HepG2 (cell line): ENCODE measurements at regions of chr5 and their contacts with region 1.

Region 1: DNA sequence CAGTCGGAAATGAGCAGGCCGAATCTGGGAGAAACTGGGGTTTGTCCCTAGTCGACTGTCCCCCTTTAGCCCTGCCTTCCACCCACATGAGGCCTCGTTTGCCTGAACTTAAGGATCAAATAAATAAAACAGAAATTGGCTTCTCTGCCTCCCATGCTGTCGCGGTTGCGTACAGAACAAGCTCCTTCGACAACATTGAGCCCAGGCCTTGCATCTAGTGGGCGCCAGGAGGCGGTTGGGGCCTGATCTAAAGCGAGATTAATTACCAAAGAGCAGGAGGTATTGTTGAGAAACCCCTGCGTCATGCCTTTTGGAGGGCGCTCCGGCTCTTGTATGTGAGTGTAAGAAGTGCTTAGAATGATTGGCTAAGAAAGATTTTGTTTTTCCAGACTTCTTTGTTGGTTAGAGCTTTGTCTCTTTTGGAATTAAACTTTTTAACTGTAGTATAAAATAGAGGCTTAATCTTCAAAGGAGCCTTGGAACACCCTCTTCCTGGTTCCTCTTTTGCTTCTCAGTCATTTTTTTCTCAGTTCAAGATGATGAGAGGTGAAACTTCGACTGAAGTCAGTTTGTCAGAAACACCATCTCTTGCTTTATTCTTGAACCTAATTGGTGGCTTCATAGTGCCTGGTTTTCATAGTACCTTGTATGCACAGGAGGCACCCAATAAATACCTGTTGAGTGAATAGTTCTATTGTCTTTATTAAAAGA is 827 bp downstream of the ATP6V0E1 start:
- DNase-seq: peak; percentile 80
- ATAC-seq: peak; percentile 84
- H3K4me3 ChIP-seq: peak overlapping the region; percentile 72 to 96 (median 96)
- H3K27ac ChIP-seq: peak overlapping the region; percentile 72
- H3K4me1 ChIP-seq: peaks cover 26% of the 10 kb centered on the region
- H3K27me3 ChIP-seq: no peaks in the 10 kb centered on the region
- CTCF ChIP-seq: peak; percentile 63
- EP300 ChIP-seq: no peak
- POLR2A ChIP-seq: no peak
- RAD21 ChIP-seq: peak; percentile 31

Region 2: DNA sequence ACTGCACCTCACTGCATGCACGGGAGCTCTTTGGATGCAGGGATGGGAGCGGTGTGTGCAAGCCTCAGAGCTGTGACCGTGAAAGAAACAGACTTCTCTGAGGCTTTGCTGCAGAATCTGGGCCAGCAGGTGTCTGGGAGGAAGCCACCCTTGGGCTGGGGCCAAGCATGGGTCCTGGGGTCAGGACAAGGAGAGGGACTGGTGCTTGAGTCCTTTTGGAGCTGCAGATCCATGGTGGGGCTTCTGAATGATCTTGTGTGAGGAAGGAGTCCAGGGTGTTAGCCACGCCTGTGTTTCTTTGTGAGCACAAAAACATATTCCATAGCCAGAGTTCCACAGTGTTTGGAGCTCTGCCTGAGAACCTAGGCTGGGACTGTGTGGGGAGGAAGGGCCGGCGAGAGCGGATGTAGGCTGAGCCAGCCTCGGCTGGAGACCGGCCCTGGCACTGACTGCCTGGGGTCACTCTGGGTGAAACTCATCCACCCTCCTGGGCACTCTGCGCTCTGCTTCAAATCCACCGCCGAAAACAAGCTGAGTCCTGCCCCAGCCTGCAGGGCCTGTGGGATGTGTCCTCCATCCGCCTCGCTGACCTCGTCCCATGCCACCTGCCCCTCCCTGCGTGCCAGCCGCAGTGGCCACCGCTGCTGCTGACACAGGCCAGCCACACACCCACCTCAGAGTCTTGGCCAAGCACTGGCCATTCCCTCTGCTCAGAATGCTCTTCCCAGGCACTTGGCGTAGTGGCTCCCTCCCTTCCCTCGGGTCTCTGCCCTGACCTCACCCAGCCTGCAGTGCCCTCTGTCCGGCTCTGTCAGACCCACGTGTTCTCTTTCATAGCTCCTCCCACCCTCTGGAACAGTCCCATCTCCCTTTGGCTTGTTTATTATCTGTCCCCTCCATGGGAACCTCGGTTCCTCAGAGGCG is 123.6 kb before region 1 on chr5:
- CTCF ChIA-PET with region 1: no interaction called
- POLR2A ChIA-PET with region 1: no interaction called
- in situ Hi-C with region 1: no loop called
- intact Hi-C with region 1: no loop called
- DNase-seq: no peak
- ATAC-seq: no peak
- H3K4me3 ChIP-seq: peak overlapping the region in 1 of 3 experiments; percentile 6; a peak in 1 of 6 replicates
- H3K27ac ChIP-seq: peak overlapping the region; percentile 99
- H3K4me1 ChIP-seq: peaks cover 87% of the 10 kb centered on the region
- H3K27me3 ChIP-seq: no peaks in the 10 kb centered on the region
- CTCF ChIP-seq: no peak
- EP300 ChIP-seq: no peak
- POLR2A ChIP-seq: no peak
- RAD21 ChIP-seq: no peak

Region 3: DNA sequence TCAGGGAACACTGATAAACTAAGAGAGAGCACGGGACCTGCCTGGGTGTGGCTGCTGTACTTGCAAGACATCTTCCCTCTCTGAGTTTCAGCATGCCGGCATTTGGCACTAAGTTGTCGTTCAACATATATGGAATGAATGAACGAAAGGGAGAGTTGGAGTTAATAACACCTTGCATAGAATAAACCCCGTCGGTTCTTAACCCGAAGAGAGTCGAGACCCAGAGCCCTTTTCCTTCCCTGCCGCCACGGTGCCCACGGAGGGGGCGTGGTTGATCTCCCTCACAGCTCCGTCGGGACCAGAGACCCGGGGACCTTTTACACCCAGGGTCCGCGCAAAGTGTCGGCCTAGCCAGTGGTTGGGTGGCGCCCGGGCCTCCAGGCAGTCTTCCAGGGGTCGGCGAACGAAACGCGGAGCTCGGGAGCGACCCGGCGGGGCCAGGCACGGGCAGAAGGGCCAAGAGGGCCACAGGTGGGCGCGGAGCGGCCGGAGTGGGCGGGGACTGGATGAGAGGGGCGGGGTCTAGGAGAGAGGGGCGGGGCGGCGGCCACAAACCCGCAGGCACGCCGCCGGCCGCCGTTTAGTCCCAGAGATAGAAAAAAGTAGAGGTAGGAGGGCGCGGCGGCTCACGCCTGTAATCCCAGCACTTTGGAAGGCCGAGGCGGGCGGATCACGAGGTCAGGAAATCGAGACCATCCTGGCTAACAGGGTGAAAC is 25.9 kb before region 1 on chr5:
- CTCF ChIA-PET with region 1: no interaction called
- POLR2A ChIA-PET with region 1: interaction called, 17 read pairs
- in situ Hi-C with region 1: no loop called
- intact Hi-C with region 1: no loop called
- DNase-seq: peak; percentile 47
- ATAC-seq: peak; percentile 88
- H3K4me3 ChIP-seq: peak overlapping the region; percentile 81 to 99 (median 91)
- H3K27ac ChIP-seq: peak overlapping the region; percentile 81
- H3K4me1 ChIP-seq: peaks cover 15% of the 10 kb centered on the region
- H3K27me3 ChIP-seq: peaks cover 0 to 2% of the 10 kb centered on the region in 2 experiments; a peak in 1 of 5 replicates
- CTCF ChIP-seq: no peak; the same call in 1 of the 2 replicates
- EP300 ChIP-seq: no peak
- POLR2A ChIP-seq: peak in 1 of 2 experiments; percentile 41; a peak in 1 of 4 replicates
- RAD21 ChIP-seq: no peak

Region 4: GRCh38 chr5:173029499-173029921 is 45.1 kb after region 1 on chr5:
- CTCF ChIA-PET with region 1: no interaction called
- POLR2A ChIA-PET with region 1: no interaction called
- in situ Hi-C with region 1: no loop called
- intact Hi-C with region 1: no loop called
- DNase-seq: no peak
- ATAC-seq: no peak
- H3K4me3 ChIP-seq: no peak overlapping the region
- H3K27ac ChIP-seq: no peak overlapping the region
- H3K4me1 ChIP-seq: peaks cover 20% of the 10 kb centered on the region
- H3K27me3 ChIP-seq: no peaks in the 10 kb centered on the region
- CTCF ChIP-seq: no peak
- EP300 ChIP-seq: no peak
- POLR2A ChIP-seq: no peak
- RAD21 ChIP-seq: no peak

Region 5: GRCh38 chr5:173057062-173057924 is 72.9 kb after region 1 on chr5:
- CTCF ChIA-PET with region 1: no interaction called
- POLR2A ChIA-PET with region 1: interaction called, 20 read pairs
- in situ Hi-C with region 1: loop called (anchors 5 kb)
- intact Hi-C with region 1: loop called (anchors 2 kb)
- DNase-seq: peak; percentile 97
- ATAC-seq: peak; percentile 91
- H3K4me3 ChIP-seq: peak overlapping the region; percentile 83 to 98 (median 93)
- H3K27ac ChIP-seq: peak overlapping the region; percentile 89
- H3K4me1 ChIP-seq: peaks cover 36% of the 10 kb centered on the region
- H3K27me3 ChIP-seq: no peaks in the 10 kb centered on the region; a peak in 1 of 5 replicates
- CTCF ChIP-seq: no peak
- EP300 ChIP-seq: no peak
- POLR2A ChIP-seq: peak; percentile 79 to 81
- RAD21 ChIP-seq: no peak

Region 6: GRCh38 chr5:173204185-173204979 is 220.0 kb after region 1 on chr5:
- CTCF ChIA-PET with region 1: interaction called, 3 read pairs
- POLR2A ChIA-PET with region 1: no interaction called
- in situ Hi-C with region 1: no loop called
- intact Hi-C with region 1: loop called (anchors 5 kb)
- DNase-seq: peak; percentile 42
- ATAC-seq: no peak
- H3K4me3 ChIP-seq: no peak overlapping the region
- H3K27ac ChIP-seq: no peak overlapping the region
- H3K4me1 ChIP-seq: no peaks in the 10 kb centered on the region
- H3K27me3 ChIP-seq: peaks cover 1 to 21% of the 10 kb centered on the region in 2 experiments
- CTCF ChIP-seq: peak; percentile 67
- EP300 ChIP-seq: no peak
- POLR2A ChIP-seq: no peak
- RAD21 ChIP-seq: no peak

Region 7: DNA sequence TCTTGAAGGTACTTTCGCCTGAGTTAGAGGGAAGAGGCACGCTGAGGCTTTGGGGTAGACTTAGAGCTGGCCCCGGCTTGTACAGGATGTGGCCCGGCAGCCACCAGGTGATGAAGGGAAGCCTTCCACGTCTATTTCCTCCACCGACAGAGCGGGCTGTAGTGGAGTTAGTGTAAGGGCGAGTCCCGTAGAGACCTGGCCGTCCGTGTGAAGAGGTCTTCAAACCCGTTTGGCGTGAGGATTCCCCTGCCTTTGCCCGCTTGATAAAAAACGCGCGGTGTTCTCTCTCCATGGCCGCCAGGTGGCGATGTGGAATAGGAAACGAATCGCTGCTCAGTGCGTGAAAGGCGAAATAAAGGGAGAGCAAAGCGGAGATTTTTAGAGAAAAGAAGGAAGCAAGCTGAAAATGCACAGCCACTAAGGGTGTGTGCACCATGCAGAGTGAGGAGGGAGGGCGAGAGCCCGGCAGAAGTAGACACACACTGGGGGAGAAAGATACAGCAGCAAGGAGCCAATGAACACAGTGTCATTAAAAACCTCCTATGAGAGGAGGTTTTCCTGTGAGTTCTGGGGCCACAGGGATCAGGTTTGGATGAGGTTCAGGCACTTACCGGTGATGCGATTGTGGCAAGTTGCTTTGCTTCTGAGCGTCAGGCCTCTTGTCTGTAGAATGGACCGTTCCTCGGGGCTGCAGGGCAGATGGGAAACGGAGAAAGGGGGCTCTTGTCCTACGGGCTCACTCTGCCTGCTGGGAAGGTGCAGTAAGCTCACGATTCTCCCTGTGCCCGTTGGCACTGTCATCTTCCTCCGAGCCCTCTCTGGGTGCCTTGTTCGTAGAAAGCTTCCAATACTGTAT is 309.6 kb after region 1 on chr5:
- CTCF ChIA-PET with region 1: no interaction called
- POLR2A ChIA-PET with region 1: no interaction called
- in situ Hi-C with region 1: loop called (anchors 25 kb)
- intact Hi-C with region 1: no loop called
- DNase-seq: peak; percentile 78
- ATAC-seq: peak; percentile 45
- H3K4me3 ChIP-seq: peak overlapping the region; percentile 48 to 76 (median 58)
- H3K27ac ChIP-seq: no peak overlapping the region
- H3K4me1 ChIP-seq: peaks cover 88% of the 10 kb centered on the region
- H3K27me3 ChIP-seq: no peaks in the 10 kb centered on the region; a peak in 1 of 5 replicates
- CTCF ChIP-seq: peak; percentile 95
- EP300 ChIP-seq: no peak
- POLR2A ChIP-seq: no peak
- RAD21 ChIP-seq: peak; percentile 92

Region 8: DNA sequence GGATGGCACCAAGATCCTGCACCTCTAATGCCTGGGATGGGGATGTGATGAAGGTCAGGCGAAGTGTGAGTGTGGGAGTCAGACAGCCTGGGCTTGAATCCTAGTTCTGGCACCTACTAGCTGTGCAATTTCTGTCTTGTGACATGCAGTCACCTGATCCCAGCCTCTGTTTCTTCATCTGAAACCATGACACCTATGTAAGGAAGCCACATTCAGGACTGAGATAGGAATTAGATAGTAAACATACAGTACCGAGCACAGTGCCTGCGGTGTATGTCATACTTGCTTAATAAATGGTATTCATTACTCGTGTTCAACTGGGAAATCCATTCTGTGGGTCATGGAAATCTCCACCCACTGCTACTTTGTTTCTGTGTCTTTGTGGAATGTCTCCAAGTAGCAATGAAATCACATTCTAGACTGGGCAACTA is 484.4 kb after region 1 on chr5:
- CTCF ChIA-PET with region 1: no interaction called
- POLR2A ChIA-PET with region 1: no interaction called
- in situ Hi-C with region 1: no loop called
- intact Hi-C with region 1: no loop called
- DNase-seq: no peak
- ATAC-seq: no peak
- H3K4me3 ChIP-seq: no peak overlapping the region
- H3K27ac ChIP-seq: no peak overlapping the region
- H3K4me1 ChIP-seq: peaks cover 25% of the 10 kb centered on the region
- H3K27me3 ChIP-seq: peaks cover 0 to 20% of the 10 kb centered on the region in 2 experiments; a peak in 2 of 5 replicates
- CTCF ChIP-seq: no peak
- EP300 ChIP-seq: no peak
- POLR2A ChIP-seq: no peak
- RAD21 ChIP-seq: no peak

Region 9: GRCh38 chr5:173573126-173573960 is 588.9 kb after region 1 on chr5:
- CTCF ChIA-PET with region 1: no interaction called
- POLR2A ChIA-PET with region 1: no interaction called
- in situ Hi-C with region 1: loop called (anchors 25 kb)
- intact Hi-C with region 1: no loop called
- DNase-seq: peak; percentile 28
- ATAC-seq: peak; percentile 96
- H3K4me3 ChIP-seq: no peak overlapping the region; a peak in 1 of 6 replicates
- H3K27ac ChIP-seq: no peak overlapping the region
- H3K4me1 ChIP-seq: no peaks in the 10 kb centered on the region
- H3K27me3 ChIP-seq: peaks cover 0 to 30% of the 10 kb centered on the region in 2 experiments; a peak in 3 of 5 replicates
- CTCF ChIP-seq: peak; percentile 94
- EP300 ChIP-seq: no peak
- POLR2A ChIP-seq: no peak
- RAD21 ChIP-seq: peak; percentile 82